CD8-positive, alpha-beta memory T cell (primary cell): ENCODE measurements at regions of chr11 and their contacts with region 1.

Region 1: GRCh38 chr11:36289226-36289852 is at the start of gene COMMD9:
- DNase-seq: peak; percentile 87 to 95 (median 91)
- H3K4me3 ChIP-seq: peak within 1 kb of the TSS; percentile 94
- H3K4me3 Mint-ChIP-seq: peak within 1 kb of the TSS; percentile 85 to 97 (median 95)
- H3K27ac ChIP-seq: peak within 1 kb of the TSS; percentile 40
- H3K27ac Mint-ChIP-seq: peak within 1 kb of the TSS; percentile 44 to 97 (median 93)
- H3K4me1 ChIP-seq: peaks cover 12% of the 10 kb centered on the region
- H3K4me1 Mint-ChIP-seq: peaks cover 36 to 49% (median 47%) of the 10 kb centered on the region in 3 donors
- H3K27me3 ChIP-seq: no peaks in the 10 kb centered on the region
- H3K27me3 Mint-ChIP-seq: peaks cover 0 to 2% of the 10 kb centered on the region in 2 donors
- total RNA-seq, gene COMMD9: 63.6 to 71.5 TPM

Region 2: GRCh38 chr11:36333897-36334296 is 44.6 kb after region 1 on chr11:
- CTCF ChIA-PET with region 1: no interaction called
- POLR2A ChIA-PET with region 1: no interaction called
- DNase-seq: no peak
- H3K4me3 ChIP-seq: no peak overlapping the region
- H3K4me3 Mint-ChIP-seq: no peak overlapping the region
- H3K27ac ChIP-seq: no peak overlapping the region
- H3K27ac Mint-ChIP-seq: no peak overlapping the region
- H3K4me1 ChIP-seq: no peaks in the 10 kb centered on the region
- H3K4me1 Mint-ChIP-seq: no peaks in the 10 kb centered on the region
- H3K27me3 ChIP-seq: no peaks in the 10 kb centered on the region
- H3K27me3 Mint-ChIP-seq: peaks cover 0 to 7% of the 10 kb centered on the region in 2 donors

Region 3: DNA sequence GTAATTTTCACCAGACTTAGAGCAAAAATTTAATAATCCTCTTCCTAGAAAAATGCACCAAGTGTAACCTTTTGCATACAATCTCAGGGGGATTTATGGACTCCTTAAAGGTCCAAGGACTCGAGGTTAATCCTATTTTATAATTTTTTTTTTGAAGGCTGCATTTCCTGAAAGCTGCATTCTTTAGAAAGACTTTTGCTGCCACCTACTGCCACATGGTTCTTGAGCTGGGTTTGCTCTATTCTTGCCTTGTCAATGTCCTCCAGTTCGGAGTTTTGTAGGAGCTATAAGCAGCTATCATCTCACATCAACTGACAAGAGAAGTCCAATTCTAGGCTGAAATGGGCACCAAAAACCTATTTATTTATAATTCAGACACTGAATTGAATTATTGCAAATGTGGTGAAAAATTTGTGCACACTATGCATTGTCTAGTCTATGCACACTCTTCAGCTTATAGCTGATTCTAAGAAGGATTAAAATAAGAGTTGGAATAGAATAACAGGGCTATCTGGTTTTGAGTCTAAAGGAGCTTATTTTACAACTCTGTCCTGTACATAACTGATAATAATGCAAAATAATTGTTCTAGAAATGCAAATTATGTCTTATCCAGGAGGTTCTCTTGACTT is 189.5 kb after region 1 on chr11:
- CTCF ChIA-PET with region 1: interaction called, 24 read pairs
- POLR2A ChIA-PET with region 1: no interaction called
- DNase-seq: peak in 3 of 5 donors; percentile 14 to 30 (median 18)
- H3K4me3 ChIP-seq: no peak overlapping the region
- H3K4me3 Mint-ChIP-seq: no peak overlapping the region
- H3K27ac ChIP-seq: no peak overlapping the region
- H3K27ac Mint-ChIP-seq: no peak overlapping the region
- H3K4me1 ChIP-seq: no peaks in the 10 kb centered on the region
- H3K4me1 Mint-ChIP-seq: peaks cover 5 to 13% (median 13%) of the 10 kb centered on the region in 3 donors
- H3K27me3 ChIP-seq: no peaks in the 10 kb centered on the region
- H3K27me3 Mint-ChIP-seq: no peaks in the 10 kb centered on the region

Region 4: DNA sequence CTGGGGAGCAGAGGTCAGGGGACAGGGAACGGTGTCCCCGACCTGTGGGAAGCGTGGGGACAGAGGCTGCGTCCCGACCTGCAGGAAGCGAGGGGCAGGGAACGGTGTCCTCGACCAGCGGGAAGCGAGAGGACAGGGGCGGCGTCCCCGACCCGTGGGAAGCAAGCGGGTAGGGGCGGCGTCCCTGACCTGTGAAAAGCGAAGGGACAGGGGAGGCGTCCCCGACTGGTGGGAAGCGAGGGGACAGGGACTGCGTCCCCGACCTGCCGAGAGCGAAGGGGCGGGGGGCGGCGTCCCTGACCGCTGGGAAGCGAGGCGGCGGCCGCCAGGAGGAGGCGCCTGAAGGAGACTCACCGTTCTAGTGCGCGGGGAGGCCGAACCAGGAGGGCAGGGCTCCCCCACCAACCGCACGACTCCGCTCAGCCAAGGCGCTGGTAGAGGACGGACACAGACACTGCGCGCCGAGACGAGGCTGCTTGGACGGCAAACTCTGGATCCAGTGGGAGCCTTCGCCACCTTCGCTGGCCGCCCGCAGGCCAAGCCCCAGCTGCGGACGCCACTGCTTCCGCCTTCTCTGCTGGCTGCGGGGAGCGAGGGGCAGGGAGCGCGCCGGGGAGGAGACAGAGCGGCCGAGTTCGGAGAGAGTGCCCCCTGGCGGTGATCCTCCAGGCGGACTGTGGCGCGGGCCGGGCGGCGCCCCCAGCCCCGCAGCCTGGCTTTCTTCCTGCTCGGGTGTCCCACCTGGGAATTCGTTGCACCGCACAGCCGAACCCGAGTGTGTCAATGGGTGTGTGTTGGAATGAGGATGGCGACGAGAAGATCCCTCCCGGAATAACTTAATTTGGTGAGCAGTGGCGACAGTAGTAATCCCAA is 220.6 kb after region 1 on chr11 and contains the start of gene TRAF6:
- CTCF ChIA-PET with region 1: interaction called, 14 read pairs
- POLR2A ChIA-PET with region 1: no interaction called
- DNase-seq: peak; percentile 84 to 90 (median 85)
- H3K4me3 ChIP-seq: peak within 1 kb of the TSS; percentile 83
- H3K4me3 Mint-ChIP-seq: peak within 1 kb of the TSS; percentile 95 to 99 (median 98)
- H3K27ac ChIP-seq: peak within 1 kb of the TSS; percentile 82
- H3K27ac Mint-ChIP-seq: peak within 1 kb of the TSS; percentile 88 to 98 (median 94)
- H3K4me1 ChIP-seq: peaks cover 26% of the 10 kb centered on the region
- H3K4me1 Mint-ChIP-seq: peaks cover 31 to 44% (median 37%) of the 10 kb centered on the region in 3 donors
- H3K27me3 ChIP-seq: no peaks in the 10 kb centered on the region
- H3K27me3 Mint-ChIP-seq: peaks cover 1 to 10% of the 10 kb centered on the region in 2 donors
- total RNA-seq, gene TRAF6: 14.4 to 16.6 TPM